ENCODE measurements at regions of chr16 and their contacts with region 1.

Region 1: DNA sequence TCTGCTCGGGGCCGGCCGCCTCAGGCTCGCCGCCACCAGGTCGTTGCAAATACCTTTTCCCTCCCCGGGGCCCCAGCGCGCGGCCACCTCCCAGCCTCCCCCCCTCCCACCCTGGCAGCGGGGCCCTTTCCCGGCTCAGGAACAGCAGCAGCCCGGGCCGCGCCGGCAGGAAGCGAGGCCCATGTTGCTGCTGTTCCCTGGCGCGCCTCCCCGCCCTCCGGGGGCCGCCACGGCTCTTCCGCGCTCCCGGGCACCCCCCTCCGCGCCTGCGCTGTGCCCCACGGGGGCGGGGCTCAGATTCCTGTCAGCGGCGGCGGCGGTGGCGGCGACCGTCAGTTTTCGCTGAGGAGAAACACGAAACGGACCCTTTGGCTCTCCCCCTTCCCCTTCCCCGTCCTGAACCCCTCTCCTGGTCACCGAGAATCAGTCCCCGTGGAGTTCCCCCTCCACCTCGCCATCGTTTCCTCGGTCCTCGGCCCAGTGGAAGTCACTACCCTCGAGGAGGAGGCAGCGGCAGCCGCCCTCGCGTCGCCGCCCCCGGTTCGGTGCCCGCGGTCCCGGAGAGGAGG is at the start of gene NFAT5:
- DNase-seq: peak; percentile 89
- H3K4me3 Mint-ChIP-seq: peak within 1 kb of the TSS; percentile 98
- H3K27ac Mint-ChIP-seq: peak within 1 kb of the TSS; percentile 100
- H3K4me1 Mint-ChIP-seq: peaks cover 50% of the 10 kb centered on the region
- H3K27me3 Mint-ChIP-seq: no peaks in the 10 kb centered on the region
- total RNA-seq, gene NFAT5: 33.0 to 34.0 TPM

Region 2: DNA sequence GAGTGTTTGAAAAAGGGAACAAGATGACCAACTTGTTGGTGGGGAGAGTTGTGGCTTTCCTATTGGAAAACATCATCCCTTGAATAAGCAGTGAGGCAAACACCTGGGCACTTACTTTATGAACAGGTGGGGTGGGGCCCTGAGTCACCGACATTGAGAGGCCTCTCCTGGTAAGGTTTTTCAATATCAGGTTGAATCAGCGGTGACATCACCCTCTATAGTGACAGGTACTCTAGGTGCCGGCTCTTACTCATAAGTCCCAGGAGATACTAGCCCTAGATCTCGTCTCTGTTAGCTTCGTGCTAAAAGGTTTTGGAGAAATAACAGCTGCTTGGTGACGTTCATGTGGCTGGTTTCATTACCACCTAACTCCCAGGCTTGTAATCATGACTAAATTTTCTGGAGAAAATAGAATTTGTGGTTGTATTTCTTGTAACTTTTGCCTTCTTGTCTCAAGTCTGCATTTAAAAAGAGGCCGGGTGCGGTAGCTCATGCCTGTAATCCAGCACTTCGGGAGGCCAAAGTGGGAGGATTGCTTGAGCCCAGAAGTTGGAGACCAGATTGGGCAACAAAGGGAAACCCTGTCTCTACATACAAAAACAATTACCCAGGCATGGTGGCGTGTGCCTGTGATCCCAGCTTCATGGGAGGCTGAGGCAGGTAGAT is 809.4 kb before region 1 on chr16:
- CTCF ChIA-PET with region 1: no interaction called
- intact Hi-C with region 1: loop called (anchors 1 kb)
- DNase-seq: peak; percentile 93
- H3K4me3 Mint-ChIP-seq: peak overlapping the region; percentile 19
- H3K27ac Mint-ChIP-seq: peak overlapping the region; percentile 97
- H3K4me1 Mint-ChIP-seq: peaks cover 61% of the 10 kb centered on the region
- H3K27me3 Mint-ChIP-seq: no peaks in the 10 kb centered on the region

Region 3: DNA sequence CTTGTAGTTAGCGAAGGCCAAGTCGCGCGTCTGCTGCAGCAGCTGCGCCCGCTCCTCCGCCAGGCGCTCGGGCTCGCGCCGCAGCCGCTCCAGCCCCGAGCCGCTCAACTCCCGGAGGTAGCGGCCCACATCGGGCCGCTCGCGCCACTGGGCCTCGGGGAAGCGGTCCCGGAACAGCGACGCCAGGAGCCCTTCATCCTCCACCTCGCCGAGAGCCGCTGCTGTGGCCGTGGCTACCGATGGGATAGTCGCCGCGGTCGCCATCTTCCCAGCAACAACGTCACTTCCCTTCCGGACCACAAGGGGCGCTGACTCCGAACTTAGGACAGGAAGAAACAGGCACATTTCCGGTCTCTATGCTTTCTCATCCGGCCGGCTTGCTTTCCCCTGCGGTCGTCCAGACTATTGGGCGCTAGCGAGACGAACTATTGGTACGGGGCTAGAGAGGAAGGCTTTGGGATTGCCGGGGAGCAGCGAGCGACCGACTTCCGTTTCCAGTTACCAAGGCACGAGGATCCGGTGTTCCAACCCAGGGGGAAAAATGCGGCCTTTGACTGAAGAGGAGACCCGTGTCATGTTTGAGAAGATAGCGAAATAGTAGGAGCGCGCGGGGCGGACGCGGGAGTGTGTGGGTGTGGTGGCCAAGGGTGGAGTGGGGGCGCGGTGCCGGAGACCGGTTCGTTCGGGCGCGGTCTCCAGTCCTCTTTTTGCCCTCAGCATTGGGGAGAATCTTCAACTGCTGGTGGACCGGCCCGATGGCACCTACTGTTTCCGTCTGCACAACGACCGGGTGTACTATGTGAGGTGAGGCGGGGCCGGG is 226.3 kb before region 1 on chr16 and contains the starts of genes COG8 and NIP7:
- CTCF ChIA-PET with region 1: no interaction called
- intact Hi-C with region 1: loop called (anchors 2 kb)
- DNase-seq: peak; percentile 96
- H3K4me3 Mint-ChIP-seq: peak within 1 kb of the TSS; percentile 98
- H3K27ac Mint-ChIP-seq: peak within 1 kb of the TSS; percentile 95
- H3K4me1 Mint-ChIP-seq: peaks cover 53% of the 10 kb centered on the region
- H3K27me3 Mint-ChIP-seq: no peaks in the 10 kb centered on the region
- total RNA-seq, gene COG8: 21.0 to 22.6 TPM
- total RNA-seq, gene NIP7: 35.3 to 36.8 TPM

Region 4: GRCh38 chr16:69406780-69407331 is 158.9 kb before region 1 on chr16:
- CTCF ChIA-PET with region 1: no interaction called
- intact Hi-C with region 1: no loop called
- DNase-seq: no peak
- H3K4me3 Mint-ChIP-seq: no peak overlapping the region
- H3K27ac Mint-ChIP-seq: no peak overlapping the region
- H3K4me1 Mint-ChIP-seq: peaks cover 20% of the 10 kb centered on the region
- H3K27me3 Mint-ChIP-seq: no peaks in the 10 kb centered on the region

Region 5: GRCh38 chr16:69432069-69432468 is 133.7 kb before region 1 on chr16:
- CTCF ChIA-PET with region 1: no interaction called
- intact Hi-C with region 1: loop called (anchors 1 kb)
- DNase-seq: no peak
- H3K4me3 Mint-ChIP-seq: no peak overlapping the region
- H3K27ac Mint-ChIP-seq: peak overlapping the region; percentile 34
- H3K4me1 Mint-ChIP-seq: peaks cover 70% of the 10 kb centered on the region
- H3K27me3 Mint-ChIP-seq: no peaks in the 10 kb centered on the region

Region 6: GRCh38 chr16:69520800-69521602 is 44.8 kb before region 1 on chr16:
- CTCF ChIA-PET with region 1: no interaction called
- intact Hi-C with region 1: loop called (anchors 1 kb)
- DNase-seq: peak; percentile 72
- H3K4me3 Mint-ChIP-seq: no peak overlapping the region
- H3K27ac Mint-ChIP-seq: peak overlapping the region; percentile 91
- H3K4me1 Mint-ChIP-seq: peaks cover 21% of the 10 kb centered on the region
- H3K27me3 Mint-ChIP-seq: no peaks in the 10 kb centered on the region

Region 7: DNA sequence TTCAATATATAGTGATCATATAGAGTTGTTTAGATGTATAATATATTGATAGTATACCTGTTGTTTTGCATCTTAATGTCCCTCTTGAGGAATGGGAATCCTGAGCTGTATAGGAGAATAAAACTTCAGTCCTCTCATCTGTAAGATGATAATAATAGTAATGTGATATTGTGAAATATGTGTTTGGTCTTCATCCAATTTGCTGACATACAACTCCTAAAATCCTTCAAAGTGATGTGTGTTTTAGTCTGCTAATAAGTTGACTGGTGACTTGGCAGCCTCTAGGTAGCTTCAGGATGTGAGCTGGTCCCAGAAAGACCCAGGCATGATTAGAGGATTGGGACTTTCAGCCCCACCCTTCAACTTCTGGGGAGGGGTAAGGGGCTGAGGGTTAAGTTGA is 22.8 kb before region 1 on chr16:
- CTCF ChIA-PET with region 1: no interaction called
- intact Hi-C with region 1: no loop called
- DNase-seq: no peak
- H3K4me3 Mint-ChIP-seq: no peak overlapping the region
- H3K27ac Mint-ChIP-seq: no peak overlapping the region
- H3K4me1 Mint-ChIP-seq: no peaks in the 10 kb centered on the region
- H3K27me3 Mint-ChIP-seq: no peaks in the 10 kb centered on the region

Region 8: GRCh38 chr16:69613378-69614154 is 47.8 kb after region 1 on chr16:
- CTCF ChIA-PET with region 1: interaction called, 3 read pairs
- intact Hi-C with region 1: loop called (anchors 1 kb)
- DNase-seq: peak; percentile 30
- H3K4me3 Mint-ChIP-seq: no peak overlapping the region
- H3K27ac Mint-ChIP-seq: peak overlapping the region; percentile 28
- H3K4me1 Mint-ChIP-seq: peaks cover 48% of the 10 kb centered on the region
- H3K27me3 Mint-ChIP-seq: no peaks in the 10 kb centered on the region

Region 9: GRCh38 chr16:69691980-69692911 is 126.5 kb after region 1 on chr16:
- CTCF ChIA-PET with region 1: no interaction called
- intact Hi-C with region 1: no loop called
- DNase-seq: peak; percentile 37
- H3K4me3 Mint-ChIP-seq: no peak overlapping the region
- H3K27ac Mint-ChIP-seq: peak overlapping the region; percentile 80
- H3K4me1 Mint-ChIP-seq: peaks cover 14% of the 10 kb centered on the region
- H3K27me3 Mint-ChIP-seq: no peaks in the 10 kb centered on the region

Measured in activated naive CD4-positive, alpha-beta T cell treated with anti-CD3 and anti-CD28 coated beads for 36 hours (primary cell).